Ascending aorta (tissue), 2 donors: ENCODE measurements at regions of chr10 and their contacts with region 1.

Region 1: DNA sequence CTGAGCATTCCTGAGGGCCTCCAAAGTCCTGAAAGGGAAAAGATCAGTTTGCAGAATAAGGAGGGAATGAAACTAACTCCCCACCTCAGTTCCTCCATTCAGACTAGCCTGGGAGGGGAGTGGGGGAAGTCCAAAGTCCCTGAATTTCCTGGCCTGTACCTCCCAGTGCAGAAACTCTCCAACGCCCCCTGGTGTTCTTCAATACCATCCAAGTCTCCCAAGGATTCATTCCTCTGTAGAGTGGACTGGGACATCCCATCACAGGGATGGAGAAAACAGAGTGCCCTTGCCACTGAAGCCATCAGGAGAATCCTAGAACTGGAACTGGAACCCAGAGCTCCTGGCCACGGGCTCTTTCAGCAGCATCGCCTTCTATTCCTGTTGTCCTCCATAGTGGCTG is 1.6 kb upstream of the COL13A1 start:
- DNase-seq: peak in 1 of 2 donors; percentile 79
- H3K4me3 ChIP-seq: no peak overlapping the region
- H3K27ac ChIP-seq: no peak overlapping the region
- H3K4me1 ChIP-seq: peaks cover 0 to 7% of the 10 kb centered on the region in 2 donors
- H3K27me3 ChIP-seq: no peaks in the 10 kb centered on the region
- CTCF ChIP-seq: peak; percentile 51 to 76 (median 65)

Region 2: DNA sequence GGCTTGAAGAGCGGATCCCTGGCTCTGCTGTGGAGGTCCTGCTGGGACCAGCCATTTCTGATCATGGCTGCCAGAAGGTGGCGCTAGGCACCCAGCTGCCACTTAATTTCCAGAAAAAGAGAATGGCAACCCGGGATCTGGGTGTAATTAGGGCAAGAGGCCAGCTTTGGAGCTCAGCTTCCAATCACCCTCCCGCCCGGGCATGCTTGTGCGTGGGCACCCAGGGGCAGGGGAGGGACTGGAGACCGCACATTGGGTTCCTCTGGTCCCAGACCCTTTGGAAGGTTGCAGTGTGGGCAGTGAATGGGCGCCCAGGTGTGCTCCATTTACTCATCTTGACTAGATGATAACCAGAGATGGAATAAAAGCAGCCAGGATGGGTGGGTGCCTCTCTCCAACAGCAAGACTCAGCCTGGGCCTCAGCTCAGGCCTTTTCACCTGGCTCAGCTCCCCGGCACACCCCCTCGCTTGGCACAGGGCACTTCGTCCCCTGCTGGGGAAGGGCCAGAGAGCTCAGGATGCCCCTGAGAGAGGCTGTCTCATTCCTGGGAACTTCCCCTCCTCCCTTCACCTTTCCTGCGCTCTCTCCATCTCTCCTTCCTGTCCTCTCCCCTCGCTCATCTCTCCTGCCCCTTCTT is 155.3 kb before region 1 on chr10:
- intact Hi-C with region 1: loop called (anchors 1 kb)
- DNase-seq: peak in 1 of 2 donors; percentile 75
- H3K4me3 ChIP-seq: no peak overlapping the region
- H3K27ac ChIP-seq: no peak overlapping the region
- H3K4me1 ChIP-seq: peaks cover 0 to 5% of the 10 kb centered on the region in 2 donors
- H3K27me3 ChIP-seq: no peaks in the 10 kb centered on the region
- CTCF ChIP-seq: peak; percentile 76 to 90 (median 82)

Region 3: DNA sequence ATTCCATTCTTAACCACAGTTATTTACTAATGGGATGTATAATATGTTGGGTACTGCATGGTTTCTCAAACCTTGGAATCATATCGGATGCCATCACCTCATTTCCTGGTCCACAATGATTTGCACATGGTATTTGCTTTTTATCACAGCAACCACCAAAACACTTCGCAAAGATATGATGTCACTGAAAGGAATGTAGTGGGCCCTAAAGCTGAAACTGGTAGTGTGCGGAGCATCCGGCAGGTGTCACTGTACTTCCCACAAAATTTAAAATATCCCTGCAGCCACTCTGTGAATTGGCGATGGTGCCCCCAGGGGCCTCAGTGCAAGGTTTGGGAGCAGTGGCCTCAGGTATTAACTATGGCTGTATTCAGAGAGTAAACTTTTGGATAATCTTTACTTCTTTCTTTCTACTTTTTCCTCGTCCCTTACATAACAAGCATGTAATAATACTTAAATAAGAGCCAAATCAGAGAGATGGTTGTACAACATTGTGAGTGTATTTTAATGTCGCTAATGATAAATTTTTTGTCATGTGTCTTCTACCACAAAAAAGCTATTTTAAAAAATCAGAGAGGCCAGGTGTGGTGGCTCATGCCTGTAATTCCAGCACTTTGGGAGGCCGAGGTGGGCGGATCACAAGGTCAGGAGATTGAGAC is 103.9 kb before region 1 on chr10:
- intact Hi-C with region 1: loop called (anchors 1 kb)
- DNase-seq: no peak
- H3K4me3 ChIP-seq: no peak overlapping the region
- H3K27ac ChIP-seq: no peak overlapping the region
- H3K4me1 ChIP-seq: no peaks in the 10 kb centered on the region
- H3K27me3 ChIP-seq: no peaks in the 10 kb centered on the region
- CTCF ChIP-seq: peak; percentile 35 to 55 (median 47)

Region 4: DNA sequence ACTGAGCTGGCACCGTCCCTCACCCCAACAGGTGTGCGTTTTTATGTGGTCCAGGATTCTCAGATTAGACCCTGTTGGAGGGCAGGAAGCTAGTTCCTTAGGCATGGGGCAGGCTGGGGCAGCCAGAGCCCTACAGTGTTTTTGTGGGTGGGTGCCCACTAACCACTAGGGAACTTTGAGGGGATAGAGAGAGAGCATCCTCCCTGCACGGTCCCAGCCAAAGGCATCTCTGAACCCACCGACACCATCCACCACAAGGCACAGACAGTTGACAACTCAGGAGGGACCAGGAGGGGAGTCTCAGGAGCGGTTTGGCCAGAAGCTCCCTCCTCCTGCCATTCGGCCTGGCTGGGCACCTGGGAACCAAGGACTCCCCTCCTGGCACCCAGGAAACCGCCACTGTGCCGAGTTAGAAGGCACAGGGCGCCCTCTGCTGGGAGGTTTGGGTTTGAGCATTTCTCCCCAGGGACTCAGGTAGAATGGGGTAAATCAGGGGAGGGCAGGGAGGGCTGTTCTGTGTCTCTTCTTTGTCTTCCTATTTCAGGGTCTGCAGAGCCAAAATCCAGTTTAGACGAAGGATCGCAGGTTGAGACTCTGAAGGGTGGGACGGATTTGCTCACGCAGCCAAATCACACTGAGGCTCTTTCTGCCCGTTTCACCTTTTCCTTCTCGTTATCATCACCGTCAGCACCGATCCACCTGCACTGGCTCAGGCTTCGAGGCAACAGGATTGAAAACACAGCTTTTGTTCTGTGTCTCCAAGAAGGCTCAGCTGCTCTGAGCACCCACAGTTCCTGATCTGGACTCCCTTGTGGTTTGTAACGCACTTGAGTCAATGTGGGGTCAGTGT is 83.2 kb before region 1 on chr10:
- intact Hi-C with region 1: loop called (anchors 1 kb)
- DNase-seq: no peak
- H3K4me3 ChIP-seq: no peak overlapping the region
- H3K27ac ChIP-seq: peak overlapping the region; percentile 52 to 82
- H3K4me1 ChIP-seq: peaks cover 11 to 14% of the 10 kb centered on the region in 2 donors
- H3K27me3 ChIP-seq: no peaks in the 10 kb centered on the region
- CTCF ChIP-seq: peak; percentile 38 to 70 (median 50)

Region 5: DNA sequence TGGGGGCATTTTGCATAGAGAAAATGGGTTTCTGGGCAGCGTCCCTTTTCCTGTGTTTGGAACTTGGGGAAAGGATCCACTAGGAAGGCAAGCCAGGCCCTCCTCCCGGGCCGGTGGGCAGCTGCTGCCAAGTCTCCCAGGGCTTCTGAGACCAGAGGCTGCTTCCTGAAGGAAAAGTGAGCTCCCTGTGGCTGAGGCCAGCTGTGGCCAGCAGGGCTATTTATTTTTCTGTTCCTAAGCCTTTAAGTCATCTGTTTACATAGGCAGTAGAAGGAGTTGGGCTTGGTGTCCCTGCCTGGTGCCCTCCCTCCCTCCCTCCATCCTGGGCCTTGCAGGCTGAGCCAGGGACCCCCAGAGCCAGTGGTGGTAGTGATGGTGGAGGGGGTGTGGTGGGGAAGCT is 68.9 kb before region 1 on chr10:
- intact Hi-C with region 1: loop called (anchors 1 kb)
- DNase-seq: peak in 1 of 2 donors; percentile 84
- H3K4me3 ChIP-seq: no peak overlapping the region
- H3K27ac ChIP-seq: peak overlapping the region; percentile 92 to 93
- H3K4me1 ChIP-seq: peaks cover 45 to 62% of the 10 kb centered on the region in 2 donors
- H3K27me3 ChIP-seq: no peaks in the 10 kb centered on the region
- CTCF ChIP-seq: peak; percentile 15 to 22 (median 18)

Region 6: GRCh38 chr10:69769395-69769992 is 30.6 kb before region 1 on chr10:
- intact Hi-C with region 1: loop called (anchors 1 kb)
- DNase-seq: peak in 1 of 2 donors; percentile 83
- H3K4me3 ChIP-seq: no peak overlapping the region
- H3K27ac ChIP-seq: peak overlapping the region; percentile 76 to 80
- H3K4me1 ChIP-seq: peaks cover 17 to 20% of the 10 kb centered on the region in 2 donors
- H3K27me3 ChIP-seq: no peaks in the 10 kb centered on the region
- CTCF ChIP-seq: no peak

Region 7: GRCh38 chr10:69914398-69915214 is 114.5 kb after region 1 on chr10:
- intact Hi-C with region 1: loop called (anchors 1 kb)
- DNase-seq: peak in 1 of 2 donors; percentile 88
- H3K4me3 ChIP-seq: no peak overlapping the region
- H3K27ac ChIP-seq: peak overlapping the region in 1 of 2 donors; percentile 7
- H3K4me1 ChIP-seq: peaks cover 22 to 27% of the 10 kb centered on the region in 2 donors
- H3K27me3 ChIP-seq: no peaks in the 10 kb centered on the region
- CTCF ChIP-seq: peak; percentile 90 to 98 (median 92)